ENCODE measurements at regions of chr2 and their contacts with region 1.

Region 1: DNA sequence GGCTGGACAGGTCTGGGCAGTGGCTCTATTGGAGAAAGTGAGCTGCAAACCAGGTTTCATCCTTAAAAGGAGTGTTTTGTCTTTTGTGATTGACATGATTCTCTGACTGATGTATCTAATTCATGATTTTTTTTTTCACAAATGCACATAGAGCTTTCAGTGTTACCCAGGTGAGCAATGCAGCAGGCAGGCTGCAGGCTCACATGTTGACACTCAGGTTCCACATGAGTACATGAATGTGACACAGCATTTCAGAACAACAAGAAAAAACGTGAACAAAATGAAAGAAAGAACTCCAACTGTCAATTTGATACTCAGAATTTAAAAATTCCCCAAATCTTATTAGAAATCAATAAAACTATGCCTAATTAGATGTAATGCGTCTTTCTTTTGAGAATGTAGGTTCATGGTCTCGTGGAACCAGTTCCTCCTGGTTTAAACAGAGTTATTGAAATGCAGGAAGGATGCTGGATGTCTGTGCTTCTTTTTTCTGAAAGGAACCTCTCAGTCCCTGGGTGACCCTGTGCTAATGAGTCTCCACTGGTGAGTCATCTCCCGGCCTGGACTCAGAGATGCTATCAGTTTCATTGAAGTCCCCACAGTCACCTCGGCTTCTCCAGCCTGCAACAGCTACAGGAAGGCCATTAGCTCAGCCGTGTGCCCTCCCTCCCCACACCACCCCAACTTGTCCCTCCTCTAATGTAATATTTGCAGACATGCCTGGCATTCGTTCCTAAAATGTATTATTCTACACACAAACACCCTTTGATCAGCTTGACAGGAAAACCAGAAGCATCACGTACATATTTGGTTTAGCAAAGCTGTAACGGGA is 430.4 kb downstream of the LPIN1 start:
- DNase-seq: peak; percentile 45
- ATAC-seq: peak; percentile 97
- H3K4me3 ChIP-seq: no peak overlapping the region
- H3K27ac ChIP-seq: no peak overlapping the region
- H3K4me1 ChIP-seq: peaks cover 10% of the 10 kb centered on the region
- H3K27me3 ChIP-seq: no peaks in the 10 kb centered on the region
- CTCF ChIP-seq: no peak
- EP300 ChIP-seq: no peak
- POLR2A ChIP-seq: no peak
- RAD21 ChIP-seq: no peak

Region 2: GRCh38 chr2:12151716-12152115 is 25.1 kb before region 1 on chr2:
- CTCF ChIA-PET with region 1: no interaction called
- POLR2A ChIA-PET with region 1: no interaction called
- RAD21 ChIA-PET with region 1: no interaction called
- SMC1A ChIA-PET with region 1: interaction called, 3 read pairs
- in situ Hi-C with region 1: no loop called
- intact Hi-C with region 1: loop called (anchors 1 kb)
- DNase-seq: no peak
- ATAC-seq: no peak
- H3K4me3 ChIP-seq: no peak overlapping the region
- H3K27ac ChIP-seq: no peak overlapping the region
- H3K4me1 ChIP-seq: no peaks in the 10 kb centered on the region
- H3K27me3 ChIP-seq: no peaks in the 10 kb centered on the region
- CTCF ChIP-seq: no peak
- EP300 ChIP-seq: no peak
- POLR2A ChIP-seq: no peak
- RAD21 ChIP-seq: no peak

Region 3: GRCh38 chr2:12192762-12193161 is 15.9 kb after region 1 on chr2:
- CTCF ChIA-PET with region 1: interaction called, 4 read pairs
- POLR2A ChIA-PET with region 1: no interaction called
- RAD21 ChIA-PET with region 1: no interaction called
- SMC1A ChIA-PET with region 1: interaction called, 13 read pairs
- in situ Hi-C with region 1: no loop called
- intact Hi-C with region 1: no loop called
- DNase-seq: no peak
- ATAC-seq: no peak
- H3K4me3 ChIP-seq: no peak overlapping the region
- H3K27ac ChIP-seq: no peak overlapping the region
- H3K4me1 ChIP-seq: no peaks in the 10 kb centered on the region
- H3K27me3 ChIP-seq: no peaks in the 10 kb centered on the region
- CTCF ChIP-seq: no peak
- EP300 ChIP-seq: no peak
- POLR2A ChIP-seq: no peak
- RAD21 ChIP-seq: no peak

Region 4: GRCh38 chr2:12759238-12759641 is 582.4 kb after region 1 on chr2:
- CTCF ChIA-PET with region 1: no interaction called
- POLR2A ChIA-PET with region 1: no interaction called
- RAD21 ChIA-PET with region 1: no interaction called
- SMC1A ChIA-PET with region 1: no interaction called
- in situ Hi-C with region 1: no loop called
- intact Hi-C with region 1: no loop called
- DNase-seq: no peak
- ATAC-seq: no peak
- H3K4me3 ChIP-seq: no peak overlapping the region
- H3K27ac ChIP-seq: no peak overlapping the region
- H3K4me1 ChIP-seq: no peaks in the 10 kb centered on the region
- H3K27me3 ChIP-seq: peaks cover 0 to 4% of the 10 kb centered on the region in 2 experiments; a peak in 3 of 4 replicates
- CTCF ChIP-seq: no peak
- EP300 ChIP-seq: no peak
- POLR2A ChIP-seq: no peak
- RAD21 ChIP-seq: no peak